ENCODE measurements at regions of chr1 and their contacts with region 1.

Region 1: GRCh38 chr1:214632091-214632490 is 29.1 kb downstream of the CENPF start:
- DNase-seq: peak; percentile 52
- ATAC-seq: no peak
- H3K4me3 Mint-ChIP-seq: no peak overlapping the region
- H3K27ac Mint-ChIP-seq: peak overlapping the region; percentile 59
- H3K4me1 Mint-ChIP-seq: peaks cover 17% of the 10 kb centered on the region
- H3K27me3 Mint-ChIP-seq: no peaks in the 10 kb centered on the region

Region 2: DNA sequence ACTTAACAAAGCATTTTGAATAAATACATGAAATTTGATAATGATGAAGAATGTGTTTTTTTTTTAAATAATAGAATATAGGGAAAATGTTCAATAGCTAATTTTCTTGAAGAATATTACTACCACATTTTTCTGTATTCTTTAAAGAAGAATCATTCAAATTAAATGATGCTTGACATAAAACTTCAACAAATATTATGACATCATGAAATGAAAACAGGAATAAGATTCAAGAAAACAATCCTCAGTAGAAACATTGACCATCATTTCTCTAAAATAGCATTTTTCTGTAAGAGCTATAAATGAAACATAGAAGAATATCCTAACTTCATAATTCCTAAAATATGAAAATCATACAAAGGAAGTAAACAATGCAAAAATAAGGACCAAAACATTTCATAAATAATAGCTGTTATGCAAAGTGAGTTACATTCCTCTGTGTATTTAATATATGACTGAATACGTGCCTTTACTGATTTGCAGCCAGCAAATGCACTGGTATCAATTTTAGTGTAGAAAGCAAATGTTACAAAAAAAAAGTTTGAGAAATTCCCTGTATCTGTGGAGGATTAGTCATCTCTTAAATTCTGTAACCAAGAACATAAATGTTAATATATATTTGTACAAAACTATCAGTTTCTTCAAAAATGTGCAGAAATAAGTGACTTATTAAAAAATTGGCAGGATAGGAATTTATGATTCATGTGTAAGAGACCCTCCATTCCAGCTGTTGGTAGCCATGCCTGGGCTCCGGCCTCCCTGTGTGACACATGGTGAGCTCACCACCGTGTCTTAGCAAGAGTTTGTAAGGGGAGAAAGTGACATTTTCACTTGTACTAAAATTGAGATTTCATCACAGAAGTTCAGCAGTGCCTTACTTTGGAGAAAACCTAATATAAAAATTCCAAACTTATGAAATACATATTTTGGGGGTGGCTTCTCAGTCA is 65.7 kb before region 1 on chr1:
- CTCF ChIA-PET with region 1: no interaction called
- DNase-seq: no peak
- ATAC-seq: no peak
- H3K4me3 Mint-ChIP-seq: no peak overlapping the region
- H3K27ac Mint-ChIP-seq: no peak overlapping the region
- H3K4me1 Mint-ChIP-seq: no peaks in the 10 kb centered on the region
- H3K27me3 Mint-ChIP-seq: peaks cover 39% of the 10 kb centered on the region

Region 3: DNA sequence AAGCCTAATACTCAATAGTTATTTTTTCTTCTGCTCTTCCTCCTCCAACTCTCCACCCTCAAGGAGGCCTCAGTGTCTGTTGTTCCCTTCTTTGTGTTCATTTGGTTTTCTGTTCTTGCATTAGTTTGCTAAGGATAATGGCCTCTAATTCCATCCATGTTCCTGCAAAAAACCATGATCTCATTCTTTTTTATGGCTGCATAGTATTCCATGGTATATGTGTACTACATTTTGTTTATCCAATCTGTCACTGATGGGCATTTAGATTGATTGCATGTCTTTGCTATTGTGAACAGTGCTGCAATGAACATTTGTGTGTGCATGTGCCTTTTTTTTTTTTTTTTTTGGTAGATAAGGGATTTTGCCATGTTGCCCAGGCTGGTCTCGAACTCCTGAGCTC is 22.4 kb before region 1 on chr1:
- CTCF ChIA-PET with region 1: interaction called, 12 read pairs
- DNase-seq: no peak
- ATAC-seq: no peak
- H3K4me3 Mint-ChIP-seq: no peak overlapping the region
- H3K27ac Mint-ChIP-seq: no peak overlapping the region
- H3K4me1 Mint-ChIP-seq: peaks cover 20% of the 10 kb centered on the region
- H3K27me3 Mint-ChIP-seq: no peaks in the 10 kb centered on the region

Region 4: DNA sequence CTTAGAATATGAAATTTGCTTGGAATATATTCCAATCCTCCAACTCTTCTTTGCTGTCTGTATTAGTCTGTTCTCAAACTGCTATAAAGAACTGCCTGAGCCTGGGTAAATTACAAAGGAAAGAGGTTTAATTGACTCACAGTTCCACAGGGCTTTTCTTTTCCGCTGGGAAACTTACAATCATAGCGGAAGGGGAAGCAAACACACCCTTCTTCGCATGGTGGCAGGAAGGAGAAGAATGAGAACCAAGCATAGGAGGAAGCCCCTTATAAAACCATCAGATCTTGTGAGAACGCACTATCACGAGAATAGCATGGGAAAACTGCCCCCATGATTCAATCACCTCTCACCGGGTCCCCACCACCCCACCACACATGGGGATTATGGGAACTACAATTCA is 14.2 kb before region 1 on chr1:
- CTCF ChIA-PET with region 1: interaction called, 12 read pairs
- DNase-seq: no peak
- ATAC-seq: no peak
- H3K4me3 Mint-ChIP-seq: no peak overlapping the region
- H3K27ac Mint-ChIP-seq: no peak overlapping the region
- H3K4me1 Mint-ChIP-seq: peaks cover 9% of the 10 kb centered on the region
- H3K27me3 Mint-ChIP-seq: no peaks in the 10 kb centered on the region

Measured in activated CD8-positive, alpha-beta memory T cell treated with anti-CD3 and anti-CD28 coated beads, Interleukin-2, amount 10 ng/mL, durations not matched to agents 7 days and 5 days (primary cell).